Caco-2 (cell line): ENCODE measurements at regions of chr19 and their contacts with region 1.

Region 1: DNA sequence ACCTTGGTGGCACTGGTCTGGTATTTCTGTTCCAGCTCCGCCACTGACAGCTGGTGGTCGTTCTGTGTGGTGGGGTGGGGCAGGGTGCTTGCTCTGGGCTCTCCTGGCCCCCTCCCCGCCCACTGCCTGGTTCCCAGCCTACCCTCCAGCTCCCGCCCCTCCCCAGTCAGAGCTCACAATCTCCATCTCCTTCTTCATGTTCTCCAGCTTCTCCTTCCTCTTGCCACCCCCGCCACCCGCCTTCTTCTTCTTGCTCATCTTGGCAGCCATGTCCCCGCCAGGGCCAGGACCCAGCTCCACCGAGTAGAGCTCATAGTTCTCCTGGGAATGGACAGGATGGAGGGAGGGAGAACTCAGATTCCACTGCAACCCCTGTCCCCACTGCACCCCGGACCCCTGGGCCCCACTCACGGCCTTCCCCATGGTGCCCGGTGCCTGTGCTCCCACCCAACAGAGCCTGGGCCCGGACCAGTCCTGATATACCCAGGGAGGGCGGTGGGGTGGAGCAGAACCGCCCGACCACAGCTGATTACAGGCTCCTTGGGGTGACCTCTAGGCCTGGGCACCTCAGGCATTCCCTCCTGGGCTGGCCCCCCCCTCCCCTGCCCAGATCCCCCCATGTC is at the start of gene ATP4A:
- DNase-seq: no peak
- H3K4me3 ChIP-seq: no peak within 1 kb of the TSS
- H3K4me3 Mint-ChIP-seq: no peak within 1 kb of the TSS
- H3K27ac Mint-ChIP-seq: no peak within 1 kb of the TSS
- H3K4me1 ChIP-seq: no peaks in the 10 kb centered on the region
- H3K4me1 Mint-ChIP-seq: no peaks in the 10 kb centered on the region
- H3K27me3 ChIP-seq: no peaks in the 10 kb centered on the region
- H3K27me3 Mint-ChIP-seq: peaks cover 24% of the 10 kb centered on the region
- CTCF ChIP-seq: no peak
- total RNA-seq, gene ATP4A: not detected in 2 replicates

Region 2: DNA sequence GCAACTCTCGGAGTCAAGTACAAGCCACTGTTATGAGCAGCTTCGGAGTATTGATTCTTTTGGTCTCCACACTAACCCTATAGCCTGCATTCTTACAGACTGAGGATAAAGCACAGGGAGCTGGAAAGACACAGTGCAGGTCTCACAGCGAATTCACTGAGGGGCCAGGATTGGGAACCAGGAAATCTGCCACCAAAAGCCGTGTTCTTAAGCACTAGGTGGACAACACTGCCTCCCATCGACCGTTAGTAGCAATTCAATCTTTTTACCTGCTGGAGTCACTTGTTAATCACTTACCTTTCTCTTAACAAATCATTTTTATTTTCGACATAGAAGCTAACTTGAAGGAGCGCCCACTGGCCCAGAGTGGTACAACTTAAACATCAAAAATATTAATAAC is 28.9 kb after region 1 on chr19:
- CTCF ChIA-PET with region 1: interaction called, 11 read pairs
- POLR2A ChIA-PET with region 1: no interaction called
- intact Hi-C with region 1: no loop called
- DNase-seq: peak in 1 of 2 experiments; percentile 32
- H3K4me3 ChIP-seq: no peak overlapping the region
- H3K4me3 Mint-ChIP-seq: no peak overlapping the region
- H3K27ac Mint-ChIP-seq: no peak overlapping the region
- H3K4me1 ChIP-seq: no peaks in the 10 kb centered on the region
- H3K4me1 Mint-ChIP-seq: no peaks in the 10 kb centered on the region
- H3K27me3 ChIP-seq: no peaks in the 10 kb centered on the region
- H3K27me3 Mint-ChIP-seq: peaks cover 2% of the 10 kb centered on the region
- CTCF ChIP-seq: peak; percentile 32 to 43